Activated B cell treated with CpG ODN at 0.5 μM for 24 hours (primary cell): ENCODE measurements at regions of chr2 and their contacts with region 1.

Region 1: GRCh38 chr2:46763861-46764260 is 151.7 kb downstream of the MCFD2 start:
- DNase-seq: no peak
- ATAC-seq: no peak
- H3K4me3 Mint-ChIP-seq: no peak overlapping the region
- H3K27ac Mint-ChIP-seq: no peak overlapping the region
- H3K4me1 Mint-ChIP-seq: no peaks in the 10 kb centered on the region
- H3K27me3 Mint-ChIP-seq: no peaks in the 10 kb centered on the region
- CTCF ChIP-seq: no peak

Region 2: GRCh38 chr2:46679761-46680160 is 84.1 kb before region 1 on chr2:
- CTCF ChIA-PET with region 1: no interaction called
- POLR2A ChIA-PET with region 1: no interaction called
- intact Hi-C with region 1: no loop called
- DNase-seq: no peak
- ATAC-seq: no peak
- H3K4me3 Mint-ChIP-seq: no peak overlapping the region
- H3K27ac Mint-ChIP-seq: no peak overlapping the region
- H3K4me1 Mint-ChIP-seq: peaks cover 48% of the 10 kb centered on the region
- H3K27me3 Mint-ChIP-seq: peaks cover 5% of the 10 kb centered on the region
- CTCF ChIP-seq: no peak

Region 3: GRCh38 chr2:47272031-47272864 is 508.4 kb after region 1 on chr2:
- CTCF ChIA-PET with region 1: no interaction called
- POLR2A ChIA-PET with region 1: interaction called, 15 read pairs
- intact Hi-C with region 1: no loop called
- DNase-seq: peak; percentile 68
- ATAC-seq: peak; percentile 92
- H3K4me3 Mint-ChIP-seq: peak overlapping the region; percentile 76
- H3K27ac Mint-ChIP-seq: peak overlapping the region; percentile 52
- H3K4me1 Mint-ChIP-seq: peaks cover 25% of the 10 kb centered on the region
- H3K27me3 Mint-ChIP-seq: no peaks in the 10 kb centered on the region
- CTCF ChIP-seq: peak; percentile 96